Calu3 (cell line): ENCODE measurements at regions of chr1 and their contacts with region 1.

Region 1: GRCh38 chr1:94299627-94300552 is 62.5 kb upstream of the ARHGAP29 start:
- DNase-seq: peak; percentile 75
- H3K4me3 Mint-ChIP-seq: peak overlapping the region; percentile 44
- H3K27ac Mint-ChIP-seq: peak overlapping the region; percentile 82
- H3K4me1 Mint-ChIP-seq: peaks cover 30% of the 10 kb centered on the region
- H3K27me3 Mint-ChIP-seq: no peaks in the 10 kb centered on the region
- CTCF ChIP-seq: no peak

Region 2: GRCh38 chr1:93846992-93847810 is 452.7 kb before region 1 on chr1:
- CTCF ChIA-PET with region 1: no interaction called
- intact Hi-C with region 1: no loop called
- DNase-seq: peak; percentile 87
- H3K4me3 Mint-ChIP-seq: peak overlapping the region; percentile 84
- H3K27ac Mint-ChIP-seq: peak overlapping the region; percentile 95
- H3K4me1 Mint-ChIP-seq: peaks cover 20% of the 10 kb centered on the region
- H3K27me3 Mint-ChIP-seq: no peaks in the 10 kb centered on the region
- CTCF ChIP-seq: no peak

Region 3: GRCh38 chr1:94310570-94311270 is 10.8 kb after region 1 on chr1:
- CTCF ChIA-PET with region 1: interaction called, 18 read pairs
- intact Hi-C with region 1: no loop called
- DNase-seq: no peak
- H3K4me3 Mint-ChIP-seq: no peak overlapping the region
- H3K27ac Mint-ChIP-seq: no peak overlapping the region
- H3K4me1 Mint-ChIP-seq: peaks cover 31% of the 10 kb centered on the region
- H3K27me3 Mint-ChIP-seq: no peaks in the 10 kb centered on the region
- CTCF ChIP-seq: no peak